PC-9 (cell line): ENCODE measurements at regions of chr4 and their contacts with region 1.

Region 1: DNA sequence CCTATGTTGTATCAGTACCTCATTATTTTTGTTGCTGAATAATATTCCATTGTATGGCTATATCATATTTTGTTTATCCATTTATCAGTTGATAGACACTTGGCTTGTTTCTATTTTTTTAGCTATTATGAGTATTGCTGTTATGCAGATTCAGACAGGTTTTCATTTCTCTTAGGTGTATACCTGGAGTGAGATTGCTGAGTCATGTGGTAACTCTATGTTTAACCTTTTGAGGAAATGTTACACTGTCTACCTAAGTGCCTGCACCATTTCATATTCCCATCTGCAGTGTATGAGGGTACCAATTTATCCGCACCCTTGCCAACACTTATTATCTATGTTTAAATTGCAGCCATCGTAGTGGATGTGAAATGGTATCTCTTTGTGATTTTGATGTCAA is 43.0 kb upstream of the SH3RF1 start:
- DNase-seq: no peak
- H3K4me3 ChIP-seq: no peak overlapping the region
- H3K27ac ChIP-seq: no peak overlapping the region
- H3K4me1 ChIP-seq: no peaks in the 10 kb centered on the region
- H3K27me3 ChIP-seq: no peaks in the 10 kb centered on the region
- CTCF ChIP-seq: no peak

Region 2: GRCh38 chr4:169231647-169232262 is 82.0 kb before region 1 on chr4:
- CTCF ChIA-PET with region 1: no interaction called
- POLR2A ChIA-PET with region 1: interaction called, 10 read pairs
- intact Hi-C with region 1: no loop called
- DNase-seq: peak in 1 of 2 experiments; percentile 54
- H3K4me3 ChIP-seq: no peak overlapping the region
- H3K27ac ChIP-seq: peak overlapping the region; percentile 23; the same call in 1 of the 2 replicates
- H3K4me1 ChIP-seq: peaks cover 15% of the 10 kb centered on the region
- H3K27me3 ChIP-seq: no peaks in the 10 kb centered on the region
- CTCF ChIP-seq: no peak

Region 3: GRCh38 chr4:169345194-169345787 is 31.6 kb after region 1 on chr4:
- CTCF ChIA-PET with region 1: no interaction called
- POLR2A ChIA-PET with region 1: no interaction called
- intact Hi-C with region 1: no loop called
- DNase-seq: peak; percentile 26 to 70
- H3K4me3 ChIP-seq: no peak overlapping the region
- H3K27ac ChIP-seq: peak overlapping the region; percentile 72
- H3K4me1 ChIP-seq: peaks cover 26% of the 10 kb centered on the region
- H3K27me3 ChIP-seq: no peaks in the 10 kb centered on the region
- CTCF ChIP-seq: no peak